ENCODE measurements at regions of chr12 and their contacts with region 1.

Region 1: GRCh38 chr12:47397664-47398281 is 308.1 kb downstream of the RPAP3 start:
- DNase-seq: peak; percentile 63
- ATAC-seq: peak; percentile 76
- H3K4me3 Mint-ChIP-seq: no peak overlapping the region
- H3K27ac Mint-ChIP-seq: peak overlapping the region; percentile 96
- H3K4me1 Mint-ChIP-seq: peaks cover 90% of the 10 kb centered on the region
- H3K27me3 Mint-ChIP-seq: no peaks in the 10 kb centered on the region
- CTCF ChIP-seq: peak; percentile 80

Region 2: GRCh38 chr12:47071241-47071852 is 326.4 kb before region 1 on chr12:
- CTCF ChIA-PET with region 1: interaction called, 11 read pairs
- POLR2A ChIA-PET with region 1: no interaction called
- intact Hi-C with region 1: no loop called
- DNase-seq: no peak
- ATAC-seq: no peak
- H3K4me3 Mint-ChIP-seq: no peak overlapping the region
- H3K27ac Mint-ChIP-seq: no peak overlapping the region
- H3K4me1 Mint-ChIP-seq: peaks cover 24% of the 10 kb centered on the region
- H3K27me3 Mint-ChIP-seq: no peaks in the 10 kb centered on the region
- CTCF ChIP-seq: peak; percentile 76

Region 3: GRCh38 chr12:47207340-47207717 is 190.4 kb before region 1 on chr12:
- CTCF ChIA-PET with region 1: interaction called, 19 read pairs
- POLR2A ChIA-PET with region 1: interaction called, 9 read pairs
- intact Hi-C with region 1: no loop called
- DNase-seq: peak; percentile 76
- ATAC-seq: peak; percentile 60
- H3K4me3 Mint-ChIP-seq: peak overlapping the region; percentile 79
- H3K27ac Mint-ChIP-seq: peak overlapping the region; percentile 96
- H3K4me1 Mint-ChIP-seq: peaks cover 69% of the 10 kb centered on the region
- H3K27me3 Mint-ChIP-seq: no peaks in the 10 kb centered on the region
- CTCF ChIP-seq: no peak

Region 4: DNA sequence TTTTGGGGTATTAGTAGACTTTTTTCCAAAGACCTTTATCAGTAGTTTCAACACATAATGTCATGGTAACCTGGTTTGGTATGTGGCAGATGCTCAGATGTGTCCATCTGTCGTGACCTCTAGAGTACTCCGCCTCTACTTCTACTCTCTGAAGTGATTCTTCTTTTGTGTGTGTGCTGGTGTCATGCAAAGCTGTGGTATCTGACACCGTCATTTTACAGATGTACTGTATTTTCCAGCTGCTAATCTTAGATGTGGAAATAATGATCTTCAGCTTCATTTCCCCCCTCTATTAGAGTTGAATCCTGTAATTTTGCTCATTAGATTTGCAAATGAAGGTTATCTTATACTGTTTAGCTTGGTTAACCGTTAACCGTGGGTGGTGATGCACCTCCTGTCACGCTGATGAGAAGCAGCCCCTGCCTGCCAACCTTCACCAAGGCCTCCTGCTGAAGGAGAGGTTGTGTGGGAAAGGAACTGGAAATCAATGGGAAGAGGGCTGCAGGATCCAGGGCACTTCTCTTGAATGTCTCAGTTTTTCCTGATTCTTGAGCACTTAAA is 95.6 kb before region 1 on chr12:
- CTCF ChIA-PET with region 1: interaction called, 18 read pairs
- POLR2A ChIA-PET with region 1: interaction called, 10 read pairs
- intact Hi-C with region 1: loop called (anchors 5 kb)
- DNase-seq: peak; percentile 48
- ATAC-seq: peak; percentile 84
- H3K4me3 Mint-ChIP-seq: peak overlapping the region; percentile 26
- H3K27ac Mint-ChIP-seq: peak overlapping the region; percentile 92
- H3K4me1 Mint-ChIP-seq: peaks cover 71% of the 10 kb centered on the region
- H3K27me3 Mint-ChIP-seq: no peaks in the 10 kb centered on the region
- CTCF ChIP-seq: no peak

Region 5: DNA sequence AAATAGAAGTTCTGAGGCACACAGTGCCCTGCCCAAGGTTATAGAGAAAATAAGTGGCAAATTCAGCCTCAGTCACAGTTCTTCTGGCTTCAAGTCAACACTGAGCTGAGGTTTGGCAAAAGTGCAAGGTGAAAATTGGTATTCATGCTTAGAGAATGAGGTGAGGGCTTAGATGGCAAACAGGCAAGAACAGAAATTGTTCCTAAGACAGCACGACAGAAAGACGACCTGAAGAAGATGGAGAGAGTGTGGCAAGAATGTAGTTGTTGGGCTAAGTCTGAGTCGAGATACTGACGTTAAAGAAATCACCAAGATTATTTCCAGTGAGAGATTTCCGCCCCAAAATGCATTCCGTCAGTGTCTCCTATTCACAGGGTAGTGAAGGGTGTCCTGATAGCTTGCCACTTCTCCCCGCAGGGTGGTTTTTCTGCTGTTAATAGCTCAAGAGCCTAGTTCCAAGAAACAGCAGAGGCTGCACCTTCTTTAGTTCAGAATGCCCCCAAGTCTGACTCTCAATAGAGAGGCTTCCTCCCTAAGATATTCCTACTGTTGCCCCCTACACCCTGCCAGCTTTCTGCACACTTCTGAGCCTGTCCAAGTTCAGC is 57.3 kb before region 1 on chr12:
- CTCF ChIA-PET with region 1: interaction called, 12 read pairs
- POLR2A ChIA-PET with region 1: interaction called, 3 read pairs
- intact Hi-C with region 1: no loop called
- DNase-seq: no peak
- ATAC-seq: no peak
- H3K4me3 Mint-ChIP-seq: no peak overlapping the region
- H3K27ac Mint-ChIP-seq: no peak overlapping the region
- H3K4me1 Mint-ChIP-seq: peaks cover 29% of the 10 kb centered on the region
- H3K27me3 Mint-ChIP-seq: no peaks in the 10 kb centered on the region
- CTCF ChIP-seq: no peak

Region 6: DNA sequence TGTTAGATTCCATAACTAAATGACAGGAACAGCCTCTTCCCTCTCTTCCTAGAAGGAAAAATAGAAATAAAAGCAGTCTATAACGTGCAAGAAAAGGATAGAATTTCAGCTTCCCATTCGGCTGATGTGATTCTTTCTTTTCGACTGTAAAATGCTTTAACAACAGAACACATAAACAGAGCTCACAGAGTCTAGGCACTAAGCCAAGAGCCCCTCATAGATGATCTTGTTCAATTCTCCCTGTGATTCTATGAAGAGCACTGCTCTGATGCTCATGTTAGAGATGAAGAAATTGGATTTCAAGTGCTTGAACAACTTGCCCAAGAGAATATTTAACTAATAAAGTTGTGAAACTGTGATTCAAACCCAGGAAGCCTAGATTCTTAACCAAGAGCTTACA is 75.3 kb after region 1 on chr12:
- CTCF ChIA-PET with region 1: no interaction called
- POLR2A ChIA-PET with region 1: no interaction called
- intact Hi-C with region 1: no loop called
- DNase-seq: no peak
- ATAC-seq: no peak
- H3K4me3 Mint-ChIP-seq: no peak overlapping the region
- H3K27ac Mint-ChIP-seq: no peak overlapping the region
- H3K4me1 Mint-ChIP-seq: peaks cover 4% of the 10 kb centered on the region
- H3K27me3 Mint-ChIP-seq: no peaks in the 10 kb centered on the region
- CTCF ChIP-seq: no peak

Region 7: GRCh38 chr12:47491516-47492305 is 93.9 kb after region 1 on chr12:
- CTCF ChIA-PET with region 1: no interaction called
- POLR2A ChIA-PET with region 1: no interaction called
- intact Hi-C with region 1: no loop called
- DNase-seq: no peak
- ATAC-seq: no peak
- H3K4me3 Mint-ChIP-seq: no peak overlapping the region
- H3K27ac Mint-ChIP-seq: no peak overlapping the region
- H3K4me1 Mint-ChIP-seq: peaks cover 13% of the 10 kb centered on the region
- H3K27me3 Mint-ChIP-seq: peaks cover 1% of the 10 kb centered on the region
- CTCF ChIP-seq: no peak